ENCODE measurements at regions of chr3 and their contacts with region 1.

Region 1: GRCh38 chr3:133573054-133573628 is 345 bp upstream of the CDV3 start:
- DNase-seq: peak; percentile 100
- H3K4me3 ChIP-seq: peak overlapping the region; percentile 75 to 86 (median 80)
- H3K27ac ChIP-seq: peak overlapping the region; percentile 93 to 98 (median 96)
- H3K4me1 ChIP-seq: peaks cover 0 to 66% (median 44%) of the 10 kb centered on the region in 4 donors
- H3K27me3 ChIP-seq: no peaks in the 10 kb centered on the region
- CTCF ChIP-seq: peak in 1 of 4 experiments; percentile 19
- EP300 ChIP-seq: peak in 1 of 4 donors; percentile 41
- POLR2A ChIP-seq: no peak

Region 2: GRCh38 chr3:132722164-132723024 is 850.7 kb before region 1 on chr3 and contains the start of gene NPHP3:
- intact Hi-C with region 1: loop called (anchors 5 kb)
- DNase-seq: peak; percentile 99
- H3K4me3 ChIP-seq: peak within 1 kb of the TSS; percentile 64 to 99 (median 89)
- H3K27ac ChIP-seq: peak within 1 kb of the TSS; percentile 97 to 99 (median 98)
- H3K4me1 ChIP-seq: peaks cover 0 to 38% (median 31%) of the 10 kb centered on the region in 4 donors
- H3K27me3 ChIP-seq: no peaks in the 10 kb centered on the region
- CTCF ChIP-seq: no peak
- EP300 ChIP-seq: no peak
- POLR2A ChIP-seq: peak; percentile 55 to 79
- total RNA-seq, gene NPHP3: 38.0 to 76.2 (median 42.8) TPM

Region 3: DNA sequence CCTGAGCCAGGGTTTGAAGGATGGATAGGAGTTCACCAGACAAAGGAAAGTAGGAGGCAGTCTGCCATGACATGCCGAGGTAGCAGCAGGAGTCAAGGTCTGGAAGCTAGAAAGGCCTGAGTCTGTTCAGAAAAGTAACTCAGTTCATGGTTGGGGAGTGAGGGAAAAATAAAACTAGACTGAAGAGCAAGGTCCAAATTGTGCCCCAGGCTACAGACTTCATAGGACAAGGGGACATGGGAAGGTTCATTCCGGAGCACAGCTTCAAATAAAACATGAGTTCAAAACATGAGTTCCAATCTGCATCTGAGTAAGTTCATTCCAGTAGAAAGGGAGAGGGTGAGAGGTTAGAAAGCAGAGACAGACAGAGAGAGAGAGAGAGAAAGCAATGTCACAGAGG is 133.6 kb before region 1 on chr3:
- intact Hi-C with region 1: loop called (anchors 5 kb)
- DNase-seq: no peak
- H3K4me3 ChIP-seq: no peak overlapping the region
- H3K27ac ChIP-seq: no peak overlapping the region
- H3K4me1 ChIP-seq: peaks cover 0 to 7% (median 0%) of the 10 kb centered on the region in 4 donors
- H3K27me3 ChIP-seq: no peaks in the 10 kb centered on the region
- CTCF ChIP-seq: no peak
- EP300 ChIP-seq: no peak
- POLR2A ChIP-seq: no peak

Region 4: DNA sequence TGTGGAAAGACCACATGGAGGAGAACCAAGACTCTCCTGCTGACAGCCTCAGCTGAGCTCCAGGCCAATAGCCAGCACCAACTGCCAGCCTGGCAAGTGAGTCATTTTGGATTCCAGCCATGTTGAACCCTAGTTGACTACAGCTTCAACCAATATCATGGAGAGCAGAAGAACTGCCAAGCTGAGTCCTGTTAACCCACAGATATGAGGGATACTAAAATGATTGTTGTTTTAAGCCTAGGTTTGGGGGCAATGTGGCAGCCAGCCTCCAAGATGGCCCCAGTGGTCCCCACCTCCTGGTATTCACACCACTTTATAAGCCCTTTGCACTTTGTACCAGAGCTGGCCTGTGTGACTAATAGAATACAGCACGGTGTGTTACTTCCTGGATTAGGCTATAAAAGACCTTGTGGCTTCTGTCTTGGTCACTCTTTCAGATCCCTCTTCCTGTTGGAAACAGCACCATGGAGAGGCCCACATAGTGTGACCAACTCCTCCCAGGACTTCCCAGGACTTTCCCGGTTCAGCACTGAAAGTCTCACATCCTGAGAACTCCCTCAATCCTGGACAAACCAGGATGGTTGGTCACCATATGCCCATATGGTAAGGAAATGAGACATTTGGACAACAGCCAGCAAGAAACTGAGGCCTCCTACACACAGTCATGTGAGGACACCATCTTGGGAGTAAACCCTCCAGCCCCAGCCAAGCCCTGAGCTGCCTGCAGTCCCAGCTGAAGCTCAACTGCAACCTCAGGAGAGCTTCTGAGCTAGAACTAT is 32.1 kb before region 1 on chr3:
- intact Hi-C with region 1: no loop called
- DNase-seq: no peak
- H3K4me3 ChIP-seq: no peak overlapping the region
- H3K27ac ChIP-seq: no peak overlapping the region
- H3K4me1 ChIP-seq: peaks cover 0 to 9% (median 7%) of the 10 kb centered on the region in 4 donors
- H3K27me3 ChIP-seq: no peaks in the 10 kb centered on the region
- CTCF ChIP-seq: no peak
- EP300 ChIP-seq: no peak
- POLR2A ChIP-seq: no peak

Region 5: GRCh38 chr3:133799794-133800585 is 226.8 kb after region 1 on chr3:
- intact Hi-C with region 1: loop called (anchors 5 kb)
- DNase-seq: no peak
- H3K4me3 ChIP-seq: no peak overlapping the region
- H3K27ac ChIP-seq: no peak overlapping the region
- H3K4me1 ChIP-seq: peaks cover 0 to 1% (median under 1%) of the 10 kb centered on the region in 4 donors
- H3K27me3 ChIP-seq: peaks cover 0 to 3% (median 0%) of the 10 kb centered on the region in 3 donors
- CTCF ChIP-seq: no peak
- EP300 ChIP-seq: no peak
- POLR2A ChIP-seq: no peak

Region 6: GRCh38 chr3:134485718-134486576 is 912.8 kb after region 1 on chr3 and contains the starts of genes ANAPC13 and CEP63:
- intact Hi-C with region 1: loop called (anchors 5 kb)
- DNase-seq: peak; percentile 98
- H3K4me3 ChIP-seq: peak within 1 kb of the TSS; percentile 59 to 81 (median 75)
- H3K27ac ChIP-seq: peak within 1 kb of the TSS; percentile 94 to 97 (median 96)
- H3K4me1 ChIP-seq: peaks cover 0 to 41% (median 32%) of the 10 kb centered on the region in 4 donors
- H3K27me3 ChIP-seq: no peaks in the 10 kb centered on the region
- CTCF ChIP-seq: no peak
- EP300 ChIP-seq: no peak
- POLR2A ChIP-seq: peak; percentile 35 to 62
- total RNA-seq, gene ANAPC13: 46.7 to 78.1 (median 61.1) TPM
- total RNA-seq, gene CEP63: 22.5 to 33.5 (median 25.6) TPM

Measured in sigmoid colon (tissue), 7 donors.